ENCODE measurements at regions of chr2 and their contacts with region 1.

Region 1: DNA sequence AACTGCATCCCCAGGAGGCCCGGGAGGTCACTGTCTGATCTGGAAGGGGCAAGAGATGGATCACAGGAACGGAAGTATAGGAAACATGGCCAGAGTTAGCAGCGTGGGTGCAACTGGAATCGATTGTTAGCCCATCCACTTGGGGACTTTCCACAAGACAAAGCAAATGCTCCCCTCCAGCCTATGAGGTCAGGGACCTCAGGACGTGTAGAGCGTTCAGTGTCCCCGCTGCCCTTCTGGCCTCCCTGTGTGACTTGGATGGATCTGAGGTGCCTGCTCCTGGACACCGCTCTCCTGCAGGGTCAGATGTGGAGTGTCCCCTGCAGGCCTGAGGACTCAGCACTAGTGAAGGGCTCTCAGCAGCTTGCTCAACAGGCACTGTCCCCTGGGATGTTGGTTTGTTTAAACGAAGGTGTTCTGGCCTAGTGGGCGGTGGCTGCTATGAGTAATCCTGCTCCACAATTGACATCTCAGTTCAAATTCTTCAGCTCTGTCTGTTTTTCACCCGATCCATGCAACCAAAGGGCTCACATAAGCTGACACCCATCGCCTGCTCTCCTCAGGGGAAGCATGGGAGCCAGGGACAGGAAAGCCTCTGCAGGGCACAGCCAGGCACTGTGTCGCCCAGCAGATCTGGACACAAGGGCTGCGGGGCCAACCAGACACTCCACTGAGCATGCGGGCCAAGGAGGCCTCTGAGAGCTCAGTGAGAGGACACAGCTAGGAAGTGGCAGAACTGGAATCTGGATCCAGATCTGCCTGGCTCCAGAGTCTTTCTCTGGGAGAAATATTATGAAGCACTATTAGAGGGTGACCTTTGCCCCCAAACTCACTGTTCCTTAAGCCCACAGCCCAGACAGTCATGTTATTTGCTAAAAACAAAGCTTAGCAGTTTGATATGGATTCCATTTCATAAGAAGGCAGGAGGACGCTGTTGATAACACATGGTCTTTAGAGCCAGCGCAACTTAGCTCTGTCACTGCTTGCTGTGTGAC is 78.5 kb downstream of the RHOB start:
- DNase-seq: peak; percentile 57
- ATAC-seq: peak; percentile 35 to 55

Region 2: GRCh38 chr2:20422402-20423271 is 102.7 kb before region 1 on chr2:
- intact Hi-C with region 1: no loop called
- DNase-seq: no peak
- ATAC-seq: peak; percentile 47 to 53

Region 3: DNA sequence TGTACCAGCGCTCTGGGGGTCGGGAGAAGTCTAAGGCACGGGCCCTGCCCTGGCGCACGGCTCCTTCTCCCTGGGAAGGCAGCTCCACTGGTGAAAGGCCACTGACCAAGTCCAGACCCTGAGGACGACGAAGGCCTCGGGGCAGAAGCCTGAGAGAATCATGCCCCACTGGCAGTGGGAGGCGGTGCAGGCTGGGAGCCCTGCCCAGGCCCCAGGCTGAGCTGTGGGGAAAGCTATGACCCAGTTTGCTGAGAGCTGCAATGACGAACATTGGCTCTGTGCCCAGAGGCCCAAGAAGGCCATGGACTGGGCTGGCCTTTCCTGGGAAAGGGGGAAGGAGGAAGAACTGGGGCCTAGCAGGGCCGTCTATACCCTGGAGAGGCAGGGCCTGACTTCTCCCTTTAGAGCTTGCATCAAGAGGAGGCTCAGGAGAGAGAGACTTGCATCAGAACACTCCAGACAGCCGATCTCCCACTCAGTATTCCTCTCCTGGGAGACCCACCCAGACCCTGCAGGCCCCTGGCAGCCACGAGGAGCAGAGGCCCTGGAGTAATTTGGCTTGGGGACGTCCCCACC is 92.6 kb after region 1 on chr2:
- intact Hi-C with region 1: loop called in 1 of 2 experiments (anchors 10 kb)
- DNase-seq: peak; percentile 99
- ATAC-seq: peak; percentile 83 to 90

Measured in left cardiac atrium (tissue), 4 donors.